HEK293 (cell line): ENCODE measurements at regions of chr15 and their contacts with region 1.

Region 1: GRCh38 chr15:82749951-82750830 is 40.5 kb upstream of the AP3B2 start:
- H3K4me3 ChIP-seq: peak overlapping the region; percentile 84
- H3K27ac ChIP-seq: peak overlapping the region; percentile 49
- H3K4me1 ChIP-seq: no peaks in the 10 kb centered on the region
- CTCF ChIP-seq: no peak

Region 2: DNA sequence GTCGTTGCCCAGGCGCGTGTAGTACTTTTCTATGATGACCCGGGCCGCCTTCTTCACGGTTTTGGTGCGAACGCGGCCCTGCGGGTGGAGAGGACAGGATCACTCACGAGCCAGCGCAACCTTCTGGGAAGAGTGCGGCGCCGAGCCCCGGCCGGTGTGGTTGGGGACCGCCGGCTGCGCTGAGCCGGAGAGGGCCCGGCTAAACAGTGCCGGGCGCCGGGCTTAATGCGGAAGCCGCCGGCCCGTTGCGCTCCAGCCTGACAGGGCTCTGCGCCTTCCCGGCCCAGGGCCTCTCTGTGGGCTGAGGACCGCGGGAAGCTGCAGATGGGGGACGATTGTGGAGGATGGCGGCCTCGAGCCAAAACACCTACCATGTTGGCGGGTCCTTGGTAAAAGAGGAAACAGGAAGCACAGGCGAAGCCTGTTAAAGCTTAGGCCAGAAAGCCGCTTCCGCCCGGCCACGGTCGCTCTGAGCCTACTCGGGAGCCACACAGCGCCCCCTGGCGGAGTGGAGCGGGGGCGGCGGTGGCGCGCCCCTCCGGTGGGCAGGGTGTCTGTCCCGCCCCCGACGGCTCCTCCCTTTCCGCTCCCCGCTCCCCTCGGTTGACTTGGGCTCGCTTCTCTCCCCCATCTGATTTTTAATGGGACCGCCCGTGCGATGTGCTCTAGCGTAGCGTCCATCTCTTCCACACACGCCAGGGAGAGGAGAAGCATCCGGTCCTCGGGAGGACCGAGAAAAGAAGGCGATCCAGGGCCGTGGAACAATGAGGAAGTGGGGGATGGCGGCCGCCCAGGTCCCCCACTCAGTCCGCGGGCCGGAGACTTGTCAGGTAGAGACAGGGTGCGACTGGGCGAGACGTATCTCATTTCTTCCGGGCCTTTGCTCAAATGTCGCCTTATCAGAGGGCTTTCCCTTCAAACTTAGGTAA is 209.9 kb before region 1 on chr15 and contains the start of gene RPS17:
- CTCF ChIA-PET with region 1: interaction called, 5 read pairs
- POLR2A ChIA-PET with region 1: interaction called, 36 read pairs
- H3K4me3 ChIP-seq: peak within 1 kb of the TSS; percentile 78
- H3K27ac ChIP-seq: peak within 1 kb of the TSS; percentile 98
- H3K4me1 ChIP-seq: peaks cover 6% of the 10 kb centered on the region
- CTCF ChIP-seq: peak; percentile 99

Region 3: GRCh38 chr15:82648257-82649103 is 101.7 kb before region 1 on chr15:
- CTCF ChIA-PET with region 1: interaction called, 3 read pairs
- POLR2A ChIA-PET with region 1: interaction called, 10 read pairs
- H3K4me3 ChIP-seq: peak overlapping the region; percentile 50
- H3K27ac ChIP-seq: no peak overlapping the region
- H3K4me1 ChIP-seq: peaks cover 6% of the 10 kb centered on the region
- CTCF ChIP-seq: no peak

Region 4: GRCh38 chr15:82763361-82764116 is 13.3 kb after region 1 on chr15:
- CTCF ChIA-PET with region 1: interaction called, 4 read pairs
- POLR2A ChIA-PET with region 1: interaction called, 14 read pairs
- H3K4me3 ChIP-seq: no peak overlapping the region
- H3K27ac ChIP-seq: no peak overlapping the region
- H3K4me1 ChIP-seq: no peaks in the 10 kb centered on the region
- CTCF ChIP-seq: no peak

Region 5: GRCh38 chr15:82803793-82804574 is 53.8 kb after region 1 on chr15:
- CTCF ChIA-PET with region 1: no interaction called
- POLR2A ChIA-PET with region 1: interaction called, 11 read pairs
- H3K4me3 ChIP-seq: no peak overlapping the region
- H3K27ac ChIP-seq: no peak overlapping the region
- H3K4me1 ChIP-seq: peaks cover 15% of the 10 kb centered on the region
- CTCF ChIP-seq: no peak

Region 6: GRCh38 chr15:82809404-82810060 is 59.3 kb after region 1 on chr15 and contains the start of gene WHAMM:
- CTCF ChIA-PET with region 1: interaction called, 6 read pairs
- POLR2A ChIA-PET with region 1: interaction called, 11 read pairs
- H3K4me3 ChIP-seq: peak within 1 kb of the TSS; percentile 100
- H3K27ac ChIP-seq: peak within 1 kb of the TSS; percentile 96
- H3K4me1 ChIP-seq: peaks cover 10% of the 10 kb centered on the region
- CTCF ChIP-seq: 0 out of 2 replicates have a peak, but pooled peaks have one; percentile 7